IMR-90 (cell line): ENCODE measurements at regions of chr5 and their contacts with region 1.

Region 1: DNA sequence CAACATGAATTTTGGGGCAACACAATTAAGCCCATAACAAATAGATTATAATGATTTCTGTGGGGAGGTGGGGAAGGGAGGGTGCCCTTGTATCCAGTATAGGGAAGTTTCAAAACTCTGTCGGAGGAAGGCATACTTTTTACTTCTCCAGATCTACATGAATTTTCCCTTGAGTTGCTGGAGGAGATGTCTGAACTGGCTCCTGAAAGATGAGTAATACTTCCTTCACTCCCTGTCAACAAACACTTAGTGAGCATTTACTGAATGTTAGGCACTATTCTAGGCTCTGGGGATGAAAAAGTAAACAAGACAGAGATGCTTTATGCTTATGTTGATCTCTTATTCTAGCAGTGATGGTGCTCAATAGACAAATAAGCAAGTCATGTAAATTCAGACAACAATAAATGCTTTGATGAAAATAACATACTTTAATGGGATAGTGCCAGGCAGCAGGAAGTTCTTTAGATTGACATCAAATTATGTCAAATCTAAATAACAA is 197.9 kb upstream of the ANKH start:
- DNase-seq: no peak
- ATAC-seq: no peak
- H3K4me3 ChIP-seq: no peak overlapping the region
- H3K27ac ChIP-seq: no peak overlapping the region
- H3K4me1 ChIP-seq: no peaks in the 10 kb centered on the region
- H3K27me3 ChIP-seq: peaks cover 3% of the 10 kb centered on the region; the same call in 1 of the 2 replicates
- CTCF ChIP-seq: no peak
- POLR2A ChIP-seq: no peak
- RAD21 ChIP-seq: no peak

Region 2: DNA sequence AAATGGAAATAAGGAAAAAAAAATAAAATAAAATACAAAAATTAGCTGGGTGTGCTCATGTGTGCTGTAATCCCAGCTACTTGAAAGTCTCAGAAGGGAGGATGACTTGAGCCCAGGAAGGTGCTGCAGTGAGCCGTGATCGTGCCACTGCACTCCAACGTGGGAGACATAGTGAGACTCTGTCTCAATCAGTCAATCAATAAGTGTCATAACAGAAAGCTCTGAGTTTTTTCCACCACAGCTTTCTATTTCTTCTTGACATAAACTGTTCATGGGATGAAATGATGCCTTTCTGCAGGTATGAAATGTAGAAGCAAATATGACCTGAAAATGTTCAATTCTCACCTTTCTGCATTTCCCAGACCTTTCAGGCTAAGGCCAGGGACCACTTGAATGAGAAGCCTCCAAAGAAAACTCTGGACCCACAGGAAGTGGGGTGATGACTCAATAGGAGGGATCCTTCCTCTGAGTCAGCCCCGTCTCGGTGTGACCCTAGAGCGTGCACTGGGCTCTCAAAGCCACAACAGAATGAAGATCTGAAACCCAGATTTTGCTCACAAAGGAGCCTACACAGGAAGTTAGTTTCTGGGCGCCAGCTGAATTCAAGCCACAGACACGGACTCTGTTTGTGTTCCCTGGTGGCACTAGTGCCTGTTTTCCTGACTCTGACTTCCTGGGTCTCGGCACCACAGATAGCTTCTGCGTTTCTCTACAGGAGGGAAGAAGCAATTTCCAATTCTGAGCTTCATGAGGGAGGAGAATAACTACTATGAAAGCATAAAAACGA is 259.9 kb before region 1 on chr5:
- CTCF ChIA-PET with region 1: no interaction called
- POLR2A ChIA-PET with region 1: interaction called, 12 read pairs
- dilution Hi-C with region 1: no loop called
- in situ Hi-C with region 1: no loop called
- intact Hi-C with region 1: no loop called
- DNase-seq: peak; percentile 93
- ATAC-seq: peak; percentile 90
- H3K4me3 ChIP-seq: peak overlapping the region; percentile 13; the same call in 1 of the 2 replicates
- H3K27ac ChIP-seq: peak overlapping the region; percentile 94
- H3K4me1 ChIP-seq: peaks cover 22% of the 10 kb centered on the region
- H3K27me3 ChIP-seq: no peaks in the 10 kb centered on the region
- CTCF ChIP-seq: no peak
- POLR2A ChIP-seq: no peak; the same call in 1 of the 2 replicates
- RAD21 ChIP-seq: peak; percentile 23; the same call in 1 of the 2 replicates

Region 3: GRCh38 chr5:15417156-15417555 is 347.7 kb after region 1 on chr5:
- CTCF ChIA-PET with region 1: no interaction called
- POLR2A ChIA-PET with region 1: no interaction called
- dilution Hi-C with region 1: no loop called
- in situ Hi-C with region 1: no loop called
- intact Hi-C with region 1: no loop called
- DNase-seq: no peak
- ATAC-seq: no peak
- H3K4me3 ChIP-seq: no peak overlapping the region
- H3K27ac ChIP-seq: no peak overlapping the region
- H3K4me1 ChIP-seq: no peaks in the 10 kb centered on the region
- H3K27me3 ChIP-seq: no peaks in the 10 kb centered on the region
- CTCF ChIP-seq: no peak
- POLR2A ChIP-seq: no peak
- RAD21 ChIP-seq: no peak

Region 4: DNA sequence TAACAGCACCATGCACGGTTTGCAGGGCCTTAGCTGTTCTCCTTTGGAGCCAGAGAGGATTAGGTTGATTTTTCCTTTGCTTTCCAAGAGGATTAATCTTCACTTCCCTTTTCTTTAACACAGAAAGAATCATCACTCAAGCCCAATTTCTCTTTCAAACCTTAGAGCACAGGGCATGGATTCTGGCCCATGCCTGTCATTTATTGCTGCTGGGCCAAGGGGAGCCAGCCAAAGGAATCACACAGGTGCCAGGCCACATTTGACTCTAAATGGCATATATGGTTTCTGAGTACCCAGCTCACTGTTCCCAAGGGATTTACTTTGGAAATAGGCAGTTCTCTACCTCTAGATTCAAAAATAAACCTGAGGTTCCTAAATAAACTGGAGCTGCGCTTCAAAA is 488.8 kb after region 1 on chr5:
- CTCF ChIA-PET with region 1: no interaction called
- POLR2A ChIA-PET with region 1: no interaction called
- dilution Hi-C with region 1: no loop called
- in situ Hi-C with region 1: no loop called
- intact Hi-C with region 1: no loop called
- DNase-seq: no peak
- ATAC-seq: no peak
- H3K4me3 ChIP-seq: no peak overlapping the region
- H3K27ac ChIP-seq: no peak overlapping the region
- H3K4me1 ChIP-seq: no peaks in the 10 kb centered on the region
- H3K27me3 ChIP-seq: no peaks in the 10 kb centered on the region
- CTCF ChIP-seq: no peak
- POLR2A ChIP-seq: no peak
- RAD21 ChIP-seq: no peak